Breast epithelium (tissue), 4 donors: ENCODE measurements at regions of chr4 and their contacts with region 1.

Region 1: GRCh38 chr4:108854786-108855185 is 91.9 kb upstream of the ETNPPL start:
- DNase-seq: no peak
- H3K4me3 ChIP-seq: no peak overlapping the region
- H3K27ac ChIP-seq: no peak overlapping the region
- H3K4me1 ChIP-seq: no peaks in the 10 kb centered on the region
- H3K27me3 ChIP-seq: no peaks in the 10 kb centered on the region
- CTCF ChIP-seq: no peak
- POLR2A ChIP-seq: no peak

Region 2: GRCh38 chr4:108384544-108384943 is 470.2 kb before region 1 on chr4:
- intact Hi-C with region 1: no loop called
- DNase-seq: no peak
- H3K4me3 ChIP-seq: no peak overlapping the region
- H3K27ac ChIP-seq: no peak overlapping the region
- H3K4me1 ChIP-seq: no peaks in the 10 kb centered on the region
- H3K27me3 ChIP-seq: no peaks in the 10 kb centered on the region
- CTCF ChIP-seq: no peak
- POLR2A ChIP-seq: no peak

Region 3: DNA sequence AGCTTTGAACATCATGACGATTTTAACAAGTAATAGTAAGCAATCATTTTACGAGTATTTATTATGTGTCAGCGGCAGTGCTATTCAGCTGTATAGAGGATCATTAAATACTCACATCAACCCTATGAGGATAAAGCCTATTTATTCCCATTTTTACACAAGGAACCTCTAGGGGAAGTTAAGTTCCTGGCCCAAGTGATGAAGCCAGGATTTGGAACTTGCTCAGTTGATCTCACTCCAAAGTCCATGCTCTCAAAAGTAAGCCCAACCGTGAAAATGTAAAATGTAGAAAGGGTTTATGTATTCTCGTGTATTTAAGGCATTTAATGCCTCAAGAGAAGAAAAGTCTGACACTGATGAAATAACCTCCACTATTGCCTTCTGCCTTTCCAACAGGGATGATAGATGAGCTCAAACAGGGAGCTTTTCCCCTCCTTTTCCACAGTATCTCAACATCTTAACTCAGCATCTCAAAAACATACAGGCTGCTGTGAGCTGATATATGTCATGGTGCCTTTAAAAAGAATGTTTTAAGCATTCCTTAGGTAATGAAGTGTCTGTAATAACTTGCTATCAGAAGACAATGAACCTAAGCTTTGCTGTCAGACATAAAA is 910.1 kb after region 1 on chr4:
- intact Hi-C with region 1: loop called (anchors 5 kb)
- DNase-seq: no peak
- H3K4me3 ChIP-seq: no peak overlapping the region
- H3K27ac ChIP-seq: no peak overlapping the region
- H3K4me1 ChIP-seq: no peaks in the 10 kb centered on the region
- H3K27me3 ChIP-seq: no peaks in the 10 kb centered on the region
- CTCF ChIP-seq: no peak
- POLR2A ChIP-seq: no peak